ENCODE measurements at regions of chr7 and their contacts with region 1.

Region 1: DNA sequence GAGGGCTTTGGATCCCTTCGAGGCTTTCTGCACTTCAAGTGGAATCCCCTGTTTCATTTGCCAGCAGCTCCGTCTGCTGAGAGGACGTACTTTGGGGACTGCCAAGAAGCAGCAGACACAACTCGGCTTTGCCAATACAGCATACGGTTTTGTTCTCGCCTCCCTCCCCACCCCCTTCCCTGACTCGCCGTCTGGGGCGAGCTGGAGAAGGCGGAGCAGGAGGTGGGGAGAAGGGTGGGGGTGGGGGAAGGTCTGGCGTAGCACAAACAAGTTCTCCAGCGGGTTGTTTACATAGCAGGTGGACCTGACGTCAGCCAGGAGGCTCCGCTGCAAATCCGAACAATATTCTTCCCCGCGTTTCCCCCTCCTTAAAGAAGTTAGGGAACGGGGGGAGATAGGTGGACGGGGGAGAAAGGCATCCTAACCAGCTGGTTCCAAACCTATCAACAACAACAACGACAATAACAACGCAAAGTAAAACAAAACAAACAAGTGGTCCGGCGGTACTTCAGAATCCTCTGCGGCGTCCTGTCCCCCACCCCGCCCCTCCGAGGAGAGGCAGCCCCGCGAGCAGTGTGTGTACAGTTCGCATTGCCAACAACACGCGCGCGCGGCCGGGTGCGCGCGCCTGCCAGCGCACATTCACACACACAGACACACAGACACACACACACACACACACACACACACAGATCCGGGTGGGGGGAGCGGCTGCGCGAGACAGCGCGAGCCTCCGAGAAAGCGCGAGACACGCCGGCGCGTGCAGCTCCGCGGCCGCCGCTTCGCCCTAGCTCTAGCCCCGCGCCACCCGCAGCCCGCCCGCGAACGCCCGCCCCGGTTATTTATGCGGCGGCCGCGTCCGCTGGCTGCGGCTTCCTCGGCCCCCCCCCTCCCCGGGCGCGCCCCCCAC is 167.0 kb upstream of the PPP1R3A start:
- DNase-seq: peak; percentile 77 to 82
- H3K4me3 ChIP-seq: peak overlapping the region; percentile 88
- H3K27ac ChIP-seq: peak overlapping the region; percentile 20; the same call in 1 of the 2 replicates
- H3K4me1 ChIP-seq: peaks cover 11% of the 10 kb centered on the region; the same call in 1 of the 2 replicates
- H3K27me3 ChIP-seq: peaks cover 5% of the 10 kb centered on the region
- CTCF ChIP-seq: no peak

Region 2: DNA sequence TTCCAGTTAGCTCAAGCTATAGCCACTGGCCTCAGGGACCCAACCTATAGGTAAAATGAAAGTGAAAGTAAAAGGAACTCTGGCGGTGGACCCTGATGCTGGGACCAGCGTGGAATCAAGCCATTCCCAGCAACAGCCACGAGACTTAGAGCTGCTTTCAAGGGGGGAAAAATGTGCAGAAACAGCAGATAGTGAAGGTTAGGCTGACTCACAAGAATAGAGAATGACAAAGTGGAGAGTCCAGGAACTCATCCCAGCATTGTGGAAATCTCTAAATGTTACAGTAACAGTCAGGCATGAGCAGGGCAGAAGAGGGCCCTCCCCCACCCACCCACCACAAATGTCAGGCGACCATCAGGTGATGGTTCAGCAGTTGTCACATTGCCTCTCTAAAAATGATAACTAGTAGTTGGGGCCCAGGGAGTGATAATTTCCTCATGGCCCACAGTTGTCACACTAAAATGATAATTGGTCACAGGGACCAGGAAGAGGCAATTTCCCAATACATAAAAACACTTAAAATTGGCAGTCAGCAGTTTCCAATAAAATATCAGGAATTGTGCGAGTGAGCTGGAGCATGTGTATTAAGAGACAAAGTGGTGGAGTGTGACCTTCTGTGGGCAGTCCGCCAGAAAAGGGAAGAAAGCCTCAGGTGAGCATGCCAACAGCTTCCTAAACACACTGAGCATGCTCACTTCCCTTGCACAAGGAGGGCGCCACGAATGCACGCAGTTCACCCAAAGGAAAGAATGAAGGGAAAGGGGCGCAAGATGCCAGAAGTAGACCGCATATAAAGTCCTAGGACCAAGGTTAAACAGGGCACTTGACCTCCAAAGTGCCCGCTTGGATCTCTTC is 37.2 kb before region 1 on chr7:
- CTCF ChIA-PET with region 1: no interaction called
- POLR2A ChIA-PET with region 1: no interaction called
- intact Hi-C with region 1: no loop called
- DNase-seq: no peak
- H3K4me3 ChIP-seq: peak overlapping the region; percentile 43
- H3K27ac ChIP-seq: no peak overlapping the region
- H3K4me1 ChIP-seq: no peaks in the 10 kb centered on the region
- H3K27me3 ChIP-seq: no peaks in the 10 kb centered on the region
- CTCF ChIP-seq: no peak

Region 3: DNA sequence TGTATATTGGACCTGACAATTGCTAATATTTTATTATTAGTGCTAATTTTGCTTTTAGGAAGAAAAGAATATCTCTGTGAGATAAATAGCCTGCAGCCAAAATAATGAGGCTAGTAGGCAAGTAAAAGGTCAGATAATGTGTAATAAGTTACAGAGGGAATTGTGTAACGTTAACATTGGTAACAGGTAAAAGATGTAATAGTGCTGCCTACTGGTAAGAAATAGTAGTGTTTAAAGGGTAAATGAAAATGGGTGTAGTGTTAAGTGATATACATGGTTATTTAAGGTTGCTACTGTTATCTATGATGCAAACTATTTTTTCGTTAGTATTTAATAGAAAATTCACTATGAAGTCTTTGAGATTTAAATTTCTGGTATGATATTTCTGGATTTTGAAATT is 319.6 kb after region 1 on chr7:
- CTCF ChIA-PET with region 1: no interaction called
- POLR2A ChIA-PET with region 1: no interaction called
- intact Hi-C with region 1: loop called (anchors 5 kb)
- DNase-seq: no peak
- H3K4me3 ChIP-seq: no peak overlapping the region
- H3K27ac ChIP-seq: no peak overlapping the region
- H3K4me1 ChIP-seq: peaks cover 4% of the 10 kb centered on the region
- H3K27me3 ChIP-seq: no peaks in the 10 kb centered on the region
- CTCF ChIP-seq: peak; percentile 62

Region 4: GRCh38 chr7:114663502-114663901 is 577.7 kb after region 1 on chr7:
- CTCF ChIA-PET with region 1: interaction called, 11 read pairs
- POLR2A ChIA-PET with region 1: no interaction called
- intact Hi-C with region 1: loop called (anchors 1 kb)
- DNase-seq: peak in 1 of 2 experiments; percentile 2
- H3K4me3 ChIP-seq: no peak overlapping the region
- H3K27ac ChIP-seq: no peak overlapping the region
- H3K4me1 ChIP-seq: no peaks in the 10 kb centered on the region
- H3K27me3 ChIP-seq: no peaks in the 10 kb centered on the region
- CTCF ChIP-seq: peak; percentile 37; the same call in 1 of the 2 replicates

Region 5: GRCh38 chr7:114901781-114902180 is 815.9 kb after region 1 on chr7:
- CTCF ChIA-PET with region 1: no interaction called
- POLR2A ChIA-PET with region 1: no interaction called
- intact Hi-C with region 1: loop called (anchors 5 kb)
- DNase-seq: peak; percentile 79 to 88
- H3K4me3 ChIP-seq: 0 out of 2 replicates have a peak overlapping the region, but pooled peaks have one; percentile 12
- H3K27ac ChIP-seq: peak overlapping the region; percentile 22
- H3K4me1 ChIP-seq: peaks cover 17% of the 10 kb centered on the region
- H3K27me3 ChIP-seq: no peaks in the 10 kb centered on the region
- CTCF ChIP-seq: no peak

Region 6: GRCh38 chr7:115087437-115087836 is 1001.6 kb after region 1 on chr7:
- CTCF ChIA-PET with region 1: no interaction called
- POLR2A ChIA-PET with region 1: no interaction called
- intact Hi-C with region 1: loop called (anchors 10 kb)
- DNase-seq: peak; percentile 51 to 63
- H3K4me3 ChIP-seq: 0 out of 2 replicates have a peak overlapping the region, but pooled peaks have one; percentile 10
- H3K27ac ChIP-seq: peak overlapping the region; percentile 49
- H3K4me1 ChIP-seq: peaks cover 28% of the 10 kb centered on the region
- H3K27me3 ChIP-seq: no peaks in the 10 kb centered on the region
- CTCF ChIP-seq: no peak

Region 7: GRCh38 chr7:115851291-115851690 is 1765.4 kb after region 1 on chr7:
- CTCF ChIA-PET with region 1: interaction called, 12 read pairs
- POLR2A ChIA-PET with region 1: no interaction called
- intact Hi-C with region 1: loop called (anchors 1 kb)
- DNase-seq: peak in 1 of 2 experiments; percentile 37
- H3K4me3 ChIP-seq: no peak overlapping the region
- H3K27ac ChIP-seq: no peak overlapping the region
- H3K4me1 ChIP-seq: no peaks in the 10 kb centered on the region
- H3K27me3 ChIP-seq: no peaks in the 10 kb centered on the region
- CTCF ChIP-seq: peak; percentile 82